ENCODE measurements at regions of chr17 and their contacts with region 1.

Region 1: DNA sequence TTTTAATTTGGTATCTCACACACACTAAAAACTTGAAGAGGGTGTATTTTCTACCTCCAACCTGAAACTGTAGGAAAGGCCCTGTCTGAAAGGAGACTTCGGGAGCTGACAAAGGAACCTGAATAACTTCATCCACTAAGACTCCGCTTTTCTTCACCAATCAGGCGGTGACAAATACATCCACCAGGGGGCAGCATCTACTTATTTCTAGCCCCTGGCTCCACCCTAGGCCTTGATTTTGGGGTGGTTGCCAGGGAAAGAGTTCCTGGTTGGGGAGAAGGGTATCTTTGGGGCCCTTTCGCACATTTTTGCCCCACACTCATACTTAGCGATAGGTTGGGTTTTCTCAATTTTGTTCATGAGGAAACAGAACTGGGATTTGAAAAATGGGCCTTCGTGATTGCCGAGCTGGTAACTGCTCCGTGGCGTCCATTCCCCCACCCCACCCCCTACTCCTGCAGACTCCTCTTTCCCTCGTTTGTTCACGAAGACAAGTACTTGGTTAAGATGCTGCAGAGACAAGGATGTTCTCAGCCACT is 4.8 kb upstream of the ARL4D start:
- DNase-seq: peak; percentile 93
- H3K4me3 Mint-ChIP-seq: peak overlapping the region; percentile 8
- H3K27ac Mint-ChIP-seq: peak overlapping the region; percentile 42
- H3K4me1 Mint-ChIP-seq: peaks cover 27% of the 10 kb centered on the region
- H3K27me3 Mint-ChIP-seq: no peaks in the 10 kb centered on the region

Region 2: DNA sequence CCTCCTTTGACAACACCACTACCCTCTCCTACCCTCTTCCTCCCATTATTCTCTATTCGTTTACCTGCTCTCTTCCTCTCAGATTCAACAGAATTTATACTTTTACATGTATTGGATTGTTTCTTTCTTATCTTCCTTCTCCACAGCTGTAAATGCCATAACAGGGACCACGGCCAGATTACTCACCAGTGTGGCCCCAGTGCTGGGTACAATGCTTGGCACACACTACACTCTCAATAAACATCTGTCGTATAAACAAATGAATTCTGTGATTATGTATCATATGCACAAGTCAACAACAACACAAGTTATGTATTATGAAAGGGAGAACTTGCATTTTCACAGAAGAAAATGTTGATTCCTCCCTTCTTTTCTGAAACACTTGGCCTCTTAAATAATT is 449.8 kb before region 1 on chr17:
- CTCF ChIA-PET with region 1: no interaction called
- POLR2A ChIA-PET with region 1: no interaction called
- intact Hi-C with region 1: no loop called
- DNase-seq: no peak
- H3K4me3 Mint-ChIP-seq: no peak overlapping the region
- H3K27ac Mint-ChIP-seq: no peak overlapping the region
- H3K4me1 Mint-ChIP-seq: no peaks in the 10 kb centered on the region
- H3K27me3 Mint-ChIP-seq: no peaks in the 10 kb centered on the region

Region 3: GRCh38 chr17:43367737-43368242 is 26.2 kb before region 1 on chr17:
- CTCF ChIA-PET with region 1: interaction called, 16 read pairs
- POLR2A ChIA-PET with region 1: interaction called, 21 read pairs
- intact Hi-C with region 1: loop called (anchors 1 kb)
- DNase-seq: peak; percentile 49
- H3K4me3 Mint-ChIP-seq: peak overlapping the region; percentile 94
- H3K27ac Mint-ChIP-seq: peak overlapping the region; percentile 100
- H3K4me1 Mint-ChIP-seq: peaks cover 36% of the 10 kb centered on the region
- H3K27me3 Mint-ChIP-seq: no peaks in the 10 kb centered on the region

Region 4: GRCh38 chr17:43406676-43407645 is 12.9 kb after region 1 on chr17:
- CTCF ChIA-PET with region 1: interaction called, 22 read pairs
- POLR2A ChIA-PET with region 1: no interaction called
- intact Hi-C with region 1: no loop called
- DNase-seq: no peak
- H3K4me3 Mint-ChIP-seq: no peak overlapping the region
- H3K27ac Mint-ChIP-seq: no peak overlapping the region
- H3K4me1 Mint-ChIP-seq: no peaks in the 10 kb centered on the region
- H3K27me3 Mint-ChIP-seq: peaks cover 2% of the 10 kb centered on the region

Region 5: DNA sequence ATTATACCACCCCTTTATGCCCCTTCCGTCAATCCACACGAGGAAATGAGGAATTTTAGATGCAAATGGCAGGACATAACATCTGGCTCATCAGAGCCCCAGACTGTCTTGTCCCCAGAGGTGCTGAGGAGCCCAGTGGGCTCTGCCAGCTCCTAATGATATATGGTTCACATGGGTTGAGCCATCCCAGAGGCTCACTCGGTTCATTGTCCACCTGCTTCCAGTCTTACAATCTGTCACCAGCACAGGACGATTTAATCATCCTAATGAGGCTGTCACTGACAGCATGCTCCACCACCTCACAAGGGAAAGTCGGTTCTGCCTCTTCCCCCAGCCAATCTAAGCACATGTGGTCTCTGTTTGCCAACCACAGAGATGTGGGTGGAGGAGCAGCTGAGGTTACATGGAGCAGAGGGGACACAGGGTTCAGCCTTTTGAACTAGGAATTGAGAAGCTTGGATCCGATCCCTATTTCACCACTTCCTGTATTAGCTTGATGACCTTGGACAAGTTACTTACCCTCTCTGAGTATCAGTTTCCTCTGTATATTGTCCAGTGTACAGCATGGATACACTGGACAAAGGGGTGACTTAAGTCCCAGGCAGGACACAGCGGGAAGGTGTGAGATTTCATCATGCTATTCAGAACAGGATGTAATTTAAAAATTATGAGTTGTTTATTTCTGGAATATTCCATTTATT is 62.8 kb after region 1 on chr17:
- CTCF ChIA-PET with region 1: no interaction called
- POLR2A ChIA-PET with region 1: no interaction called
- intact Hi-C with region 1: no loop called
- DNase-seq: peak; percentile 15
- H3K4me3 Mint-ChIP-seq: no peak overlapping the region
- H3K27ac Mint-ChIP-seq: no peak overlapping the region
- H3K4me1 Mint-ChIP-seq: peaks cover 6% of the 10 kb centered on the region
- H3K27me3 Mint-ChIP-seq: peaks cover 13% of the 10 kb centered on the region

Region 6: DNA sequence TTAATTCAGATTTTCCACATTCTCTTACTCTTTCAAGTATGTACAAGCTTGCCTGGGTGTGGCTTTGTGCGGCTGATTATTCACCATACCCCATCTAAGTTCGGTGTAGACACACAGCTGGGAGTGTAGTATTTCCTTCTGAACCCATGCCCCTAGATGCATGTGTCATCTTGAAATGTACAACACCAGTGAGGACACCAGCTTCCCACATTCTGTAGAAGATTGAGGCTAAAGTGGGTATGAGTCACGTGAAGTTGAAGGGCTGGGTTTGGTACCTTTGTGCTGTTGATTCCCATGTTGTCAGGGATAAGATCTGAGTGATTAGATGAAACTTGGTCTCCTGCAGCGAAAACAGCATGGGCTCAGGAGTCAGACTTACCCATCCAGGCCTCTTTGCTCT is 75.1 kb after region 1 on chr17:
- CTCF ChIA-PET with region 1: interaction called, 11 read pairs
- POLR2A ChIA-PET with region 1: no interaction called
- intact Hi-C with region 1: no loop called
- DNase-seq: no peak
- H3K4me3 Mint-ChIP-seq: no peak overlapping the region
- H3K27ac Mint-ChIP-seq: no peak overlapping the region
- H3K4me1 Mint-ChIP-seq: no peaks in the 10 kb centered on the region
- H3K27me3 Mint-ChIP-seq: peaks cover 12% of the 10 kb centered on the region

Region 7: GRCh38 chr17:43755389-43755875 is 361.4 kb after region 1 on chr17:
- CTCF ChIA-PET with region 1: no interaction called
- POLR2A ChIA-PET with region 1: no interaction called
- intact Hi-C with region 1: no loop called
- DNase-seq: peak; percentile 27
- H3K4me3 Mint-ChIP-seq: no peak overlapping the region
- H3K27ac Mint-ChIP-seq: no peak overlapping the region
- H3K4me1 Mint-ChIP-seq: no peaks in the 10 kb centered on the region
- H3K27me3 Mint-ChIP-seq: peaks cover 41% of the 10 kb centered on the region